CD8-positive, alpha-beta memory T cell (primary cell): ENCODE measurements at regions of chr11 and their contacts with region 1.

Region 1: GRCh38 chr11:72430741-72431570 is 3.4 kb downstream of the CLPB start:
- DNase-seq: peak in 1 of 5 donors; percentile 34
- H3K4me3 ChIP-seq: no peak overlapping the region
- H3K4me3 Mint-ChIP-seq: peak overlapping the region in 2 of 7 donors; percentile 6 to 51
- H3K27ac ChIP-seq: no peak overlapping the region
- H3K27ac Mint-ChIP-seq: peak overlapping the region in 6 of 8 donors; percentile 4 to 71 (median 52)
- H3K4me1 ChIP-seq: peaks cover 19% of the 10 kb centered on the region
- H3K4me1 Mint-ChIP-seq: peaks cover 34 to 52% (median 49%) of the 10 kb centered on the region in 3 donors
- H3K27me3 ChIP-seq: no peaks in the 10 kb centered on the region
- H3K27me3 Mint-ChIP-seq: no peaks in the 10 kb centered on the region

Region 2: GRCh38 chr11:72303179-72303578 is 127.8 kb before region 1 on chr11:
- CTCF ChIA-PET with region 1: no interaction called
- POLR2A ChIA-PET with region 1: no interaction called
- DNase-seq: no peak
- H3K4me3 ChIP-seq: no peak overlapping the region
- H3K4me3 Mint-ChIP-seq: no peak overlapping the region
- H3K27ac ChIP-seq: no peak overlapping the region
- H3K27ac Mint-ChIP-seq: no peak overlapping the region
- H3K4me1 ChIP-seq: no peaks in the 10 kb centered on the region
- H3K4me1 Mint-ChIP-seq: no peaks in the 10 kb centered on the region
- H3K27me3 ChIP-seq: no peaks in the 10 kb centered on the region
- H3K27me3 Mint-ChIP-seq: no peaks in the 10 kb centered on the region

Region 3: DNA sequence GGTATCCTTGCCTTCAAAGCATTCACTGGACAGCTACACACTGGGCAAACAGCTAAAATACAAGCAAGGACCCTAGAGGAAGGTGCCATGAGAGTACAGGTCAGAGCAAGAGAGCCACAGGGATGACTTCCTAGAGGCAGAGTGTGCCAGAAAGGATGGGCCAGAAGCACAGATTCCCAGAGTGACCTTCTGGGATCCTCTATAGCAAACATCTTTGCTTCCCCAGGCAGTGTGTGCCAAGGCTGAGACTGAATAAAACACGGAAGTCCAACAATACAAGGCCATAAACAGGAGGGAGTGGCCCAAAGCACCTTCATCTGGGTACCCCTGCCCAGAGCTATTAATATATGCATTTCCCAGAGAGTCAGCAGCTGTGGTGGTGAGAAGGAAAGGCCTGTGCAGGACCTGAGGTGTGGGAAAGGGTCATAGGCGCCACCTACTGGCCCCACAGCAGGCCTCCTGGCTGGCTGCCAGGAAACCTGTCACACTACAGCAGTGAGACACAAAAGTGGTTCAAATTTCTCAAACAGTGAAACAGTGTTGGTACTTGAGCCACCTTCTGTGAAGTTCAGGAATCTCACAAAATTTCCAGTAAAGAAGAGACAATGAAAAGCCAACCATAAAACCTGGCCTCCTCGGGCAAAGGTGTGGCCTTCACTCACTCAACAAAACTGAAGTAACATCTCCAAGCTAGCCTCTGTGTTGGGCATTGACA is 16.9 kb before region 1 on chr11:
- CTCF ChIA-PET with region 1: interaction called, 18 read pairs
- POLR2A ChIA-PET with region 1: interaction called, 3 read pairs
- DNase-seq: peak; percentile 51 to 79 (median 62)
- H3K4me3 ChIP-seq: no peak overlapping the region
- H3K4me3 Mint-ChIP-seq: no peak overlapping the region
- H3K27ac ChIP-seq: no peak overlapping the region
- H3K27ac Mint-ChIP-seq: no peak overlapping the region
- H3K4me1 ChIP-seq: peaks cover 5% of the 10 kb centered on the region
- H3K4me1 Mint-ChIP-seq: peaks cover 6 to 21% (median 20%) of the 10 kb centered on the region in 3 donors
- H3K27me3 ChIP-seq: no peaks in the 10 kb centered on the region
- H3K27me3 Mint-ChIP-seq: no peaks in the 10 kb centered on the region